ENCODE measurements at regions of chr1 and their contacts with region 1.

Region 1: GRCh38 chr1:74403606-74404005 is 108.8 kb downstream of the LRRC53 start:
- DNase-seq: no peak
- H3K4me3 ChIP-seq: no peak overlapping the region
- H3K27ac ChIP-seq: no peak overlapping the region
- H3K4me1 ChIP-seq: no peaks in the 10 kb centered on the region
- H3K27me3 ChIP-seq: no peaks in the 10 kb centered on the region
- CTCF ChIP-seq: no peak

Region 2: GRCh38 chr1:74317663-74318062 is 85.9 kb before region 1 on chr1:
- CTCF ChIA-PET with region 1: no interaction called
- POLR2A ChIA-PET with region 1: no interaction called
- intact Hi-C with region 1: no loop called
- DNase-seq: no peak
- H3K4me3 ChIP-seq: no peak overlapping the region
- H3K27ac ChIP-seq: no peak overlapping the region
- H3K4me1 ChIP-seq: no peaks in the 10 kb centered on the region
- H3K27me3 ChIP-seq: peaks cover 8% of the 10 kb centered on the region
- CTCF ChIP-seq: no peak

Region 3: DNA sequence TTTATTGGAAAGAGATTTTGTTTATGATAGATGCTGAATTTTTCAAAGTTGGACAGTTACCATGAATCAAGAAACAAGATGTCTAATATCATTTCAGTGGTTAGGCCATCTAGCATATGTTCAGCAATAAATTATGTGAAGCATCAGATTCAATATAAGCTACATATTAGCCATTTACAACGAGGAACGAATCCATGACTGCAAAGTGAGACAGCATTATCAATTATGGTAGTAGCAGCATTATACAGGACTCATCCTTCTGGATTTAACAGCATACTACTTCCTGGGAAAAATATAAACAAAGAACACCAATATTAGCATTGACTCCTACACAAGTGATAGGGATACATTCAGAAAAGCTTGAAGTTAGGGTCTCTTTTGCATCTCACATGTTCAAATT is 49.7 kb after region 1 on chr1:
- CTCF ChIA-PET with region 1: no interaction called
- POLR2A ChIA-PET with region 1: no interaction called
- intact Hi-C with region 1: loop called (anchors 2 kb)
- DNase-seq: no peak
- H3K4me3 ChIP-seq: no peak overlapping the region
- H3K27ac ChIP-seq: no peak overlapping the region
- H3K4me1 ChIP-seq: no peaks in the 10 kb centered on the region
- H3K27me3 ChIP-seq: no peaks in the 10 kb centered on the region
- CTCF ChIP-seq: no peak

Measured in A673 (cell line).